HEK293 (cell line): ENCODE measurements at regions of chr22 and their contacts with region 1.

Region 1: DNA sequence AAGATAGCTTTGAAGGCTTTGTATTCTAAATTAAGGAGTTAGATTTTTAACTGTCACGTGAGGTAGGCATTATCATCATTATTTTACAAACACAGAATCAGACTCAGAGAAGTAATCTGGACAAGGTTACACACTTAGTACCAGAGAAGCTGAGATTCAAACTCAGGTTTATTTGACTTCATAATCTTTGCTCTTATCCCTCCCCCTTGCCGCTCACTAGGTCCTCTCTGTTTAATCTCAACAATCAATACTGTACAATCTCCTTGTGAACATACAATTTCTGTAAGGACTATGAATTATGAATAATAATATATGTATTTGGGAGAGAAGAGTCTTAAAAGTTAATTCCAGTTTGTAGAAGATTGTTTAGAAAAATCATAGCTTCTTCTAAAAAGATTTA is 5.2 kb upstream of the DNAJB7 start:
- H3K4me3 ChIP-seq: no peak overlapping the region
- H3K27ac ChIP-seq: no peak overlapping the region
- H3K4me1 ChIP-seq: 0 out of 2 replicates have a peak, but pooled peaks cover 4% of the 10 kb centered on the region
- CTCF ChIP-seq: no peak

Region 2: DNA sequence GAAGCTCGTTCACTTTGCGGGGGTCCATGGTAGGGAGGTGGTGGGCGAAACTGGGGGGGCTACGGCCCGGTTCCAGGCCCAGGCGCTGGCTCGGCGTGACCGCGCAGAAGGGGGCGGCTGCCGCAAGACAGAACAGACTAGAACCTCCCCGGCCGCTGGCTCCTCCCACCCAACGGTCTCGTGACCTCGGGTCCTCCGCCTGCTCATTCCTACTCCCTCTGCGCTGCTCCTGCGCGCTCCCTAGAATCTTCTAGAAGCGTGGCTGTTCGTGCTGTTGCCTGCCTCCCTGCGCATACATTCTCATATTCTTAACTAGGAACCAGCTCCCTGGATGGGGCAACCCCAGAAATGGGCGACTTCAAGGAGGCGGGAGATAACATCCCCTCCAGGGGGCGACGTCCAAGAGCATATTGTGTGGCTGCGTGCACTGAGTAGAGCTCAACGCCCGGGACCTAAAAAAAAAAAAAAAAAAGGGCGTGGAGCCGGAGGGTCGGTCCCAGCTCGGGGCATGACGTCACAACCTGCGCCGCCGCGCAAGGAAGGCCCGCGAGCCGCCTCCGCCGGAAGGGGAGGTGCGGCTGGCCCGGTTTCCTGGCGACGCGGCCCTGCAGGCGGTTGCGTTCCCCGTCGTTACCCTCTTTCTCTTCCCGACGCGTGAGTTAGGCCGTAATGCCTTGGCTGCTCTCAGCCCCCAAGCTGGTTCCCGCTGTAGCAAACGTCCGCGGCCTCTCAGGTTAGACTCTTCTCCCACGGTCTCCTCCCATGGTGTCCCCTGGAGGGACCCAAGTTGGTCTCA is 10.4 kb before region 1 on chr22 and contains the starts of genes ST13 and XPNPEP3:
- CTCF ChIA-PET with region 1: interaction called, 4 read pairs
- POLR2A ChIA-PET with region 1: interaction called, 14 read pairs
- H3K4me3 ChIP-seq: peak within 1 kb of the TSS; percentile 53
- H3K27ac ChIP-seq: peak within 1 kb of the TSS; percentile 98
- H3K4me1 ChIP-seq: peaks cover 19% of the 10 kb centered on the region
- CTCF ChIP-seq: peak; percentile 46; the same call in 1 of the 2 replicates